CD14-positive monocyte (primary cell): ENCODE measurements at regions of chr4 and their contacts with region 1.

Region 1: DNA sequence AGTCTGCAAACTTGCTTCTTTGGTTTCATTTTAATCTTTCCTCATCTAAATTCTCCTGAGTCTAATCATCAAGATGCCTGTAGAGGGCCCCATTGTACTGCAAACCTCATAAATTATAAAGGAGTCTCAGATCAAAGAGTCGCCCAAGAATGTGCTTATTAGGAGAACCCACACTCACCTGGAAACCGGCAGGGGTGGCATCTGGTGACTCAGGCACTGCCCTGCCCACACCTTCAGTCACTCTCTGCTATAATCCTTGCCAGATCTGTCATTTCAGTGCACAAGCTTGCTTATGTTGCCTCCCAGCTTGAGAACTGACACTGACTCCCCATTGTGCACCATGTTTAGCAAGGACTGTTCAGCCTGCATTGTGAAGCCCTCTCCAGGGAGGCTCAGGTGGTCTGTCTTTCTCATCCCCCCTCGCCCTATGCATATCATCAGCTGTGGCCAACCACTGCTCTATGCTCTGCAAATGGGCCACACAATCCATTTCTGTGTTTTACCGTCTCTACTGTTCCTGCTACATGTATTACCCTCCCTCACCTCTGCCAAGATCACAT is 12.4 kb downstream of the EPGN start:
- DNase-seq: peak; percentile 47 to 77 (median 71)
- H3K4me3 ChIP-seq: no peak overlapping the region
- H3K4me3 Mint-ChIP-seq: peak overlapping the region; percentile 60 to 63
- H3K27ac ChIP-seq: no peak overlapping the region
- H3K27ac Mint-ChIP-seq: peak overlapping the region in 4 of 7 donors; percentile 6 to 45 (median 24)
- H3K4me1 ChIP-seq: peaks cover 4 to 8% of the 10 kb centered on the region in 2 donors
- H3K4me1 Mint-ChIP-seq: peaks cover 22% of the 10 kb centered on the region
- H3K27me3 ChIP-seq: no peaks in the 10 kb centered on the region
- H3K27me3 Mint-ChIP-seq: peaks cover 0 to 2% (median 0%) of the 10 kb centered on the region in 3 donors
- CTCF ChIP-seq: peak; percentile 81

Region 2: GRCh38 chr4:74278490-74278889 is 42.1 kb before region 1 on chr4:
- intact Hi-C with region 1: no loop called
- DNase-seq: no peak
- H3K4me3 ChIP-seq: no peak overlapping the region
- H3K4me3 Mint-ChIP-seq: no peak overlapping the region
- H3K27ac ChIP-seq: no peak overlapping the region
- H3K27ac Mint-ChIP-seq: peak overlapping the region in 1 of 7 donors; percentile 52
- H3K4me1 ChIP-seq: peaks cover 0 to 5% of the 10 kb centered on the region in 2 donors
- H3K4me1 Mint-ChIP-seq: peaks cover 9% of the 10 kb centered on the region
- H3K27me3 ChIP-seq: no peaks in the 10 kb centered on the region
- H3K27me3 Mint-ChIP-seq: no peaks in the 10 kb centered on the region
- CTCF ChIP-seq: no peak

Region 3: GRCh38 chr4:74364652-74365491 is 44.2 kb after region 1 on chr4 and contains the start of gene EREG:
- intact Hi-C with region 1: loop called (anchors 5 kb)
- DNase-seq: peak; percentile 83 to 98 (median 83)
- H3K4me3 ChIP-seq: peak within 1 kb of the TSS; percentile 63 to 83 (median 71)
- H3K4me3 Mint-ChIP-seq: peak within 1 kb of the TSS; percentile 88 to 94
- H3K27ac ChIP-seq: peak within 1 kb of the TSS; percentile 1 to 84
- H3K27ac Mint-ChIP-seq: peak within 1 kb of the TSS; percentile 72 to 93 (median 83)
- H3K4me1 ChIP-seq: peaks cover 21 to 30% of the 10 kb centered on the region in 2 donors
- H3K4me1 Mint-ChIP-seq: peaks cover 41% of the 10 kb centered on the region
- H3K27me3 ChIP-seq: no peaks in the 10 kb centered on the region
- H3K27me3 Mint-ChIP-seq: peaks cover 2 to 8% (median 8%) of the 10 kb centered on the region in 3 donors
- CTCF ChIP-seq: no peak
- polyA plus RNA-seq, gene EREG: 2.7 to 17.2 (median 8.2) TPM

Region 4: GRCh38 chr4:74370912-74371311 is 50.3 kb after region 1 on chr4:
- intact Hi-C with region 1: loop called (anchors 5 kb)
- DNase-seq: peak in 2 of 3 donors; percentile 64 to 71
- H3K4me3 ChIP-seq: no peak overlapping the region
- H3K4me3 Mint-ChIP-seq: no peak overlapping the region
- H3K27ac ChIP-seq: no peak overlapping the region
- H3K27ac Mint-ChIP-seq: no peak overlapping the region
- H3K4me1 ChIP-seq: peaks cover 28 to 34% of the 10 kb centered on the region in 2 donors
- H3K4me1 Mint-ChIP-seq: peaks cover 49% of the 10 kb centered on the region
- H3K27me3 ChIP-seq: no peaks in the 10 kb centered on the region
- H3K27me3 Mint-ChIP-seq: peaks cover 0 to under 1% (median 0%) of the 10 kb centered on the region in 3 donors
- CTCF ChIP-seq: peak; percentile 68

Region 5: DNA sequence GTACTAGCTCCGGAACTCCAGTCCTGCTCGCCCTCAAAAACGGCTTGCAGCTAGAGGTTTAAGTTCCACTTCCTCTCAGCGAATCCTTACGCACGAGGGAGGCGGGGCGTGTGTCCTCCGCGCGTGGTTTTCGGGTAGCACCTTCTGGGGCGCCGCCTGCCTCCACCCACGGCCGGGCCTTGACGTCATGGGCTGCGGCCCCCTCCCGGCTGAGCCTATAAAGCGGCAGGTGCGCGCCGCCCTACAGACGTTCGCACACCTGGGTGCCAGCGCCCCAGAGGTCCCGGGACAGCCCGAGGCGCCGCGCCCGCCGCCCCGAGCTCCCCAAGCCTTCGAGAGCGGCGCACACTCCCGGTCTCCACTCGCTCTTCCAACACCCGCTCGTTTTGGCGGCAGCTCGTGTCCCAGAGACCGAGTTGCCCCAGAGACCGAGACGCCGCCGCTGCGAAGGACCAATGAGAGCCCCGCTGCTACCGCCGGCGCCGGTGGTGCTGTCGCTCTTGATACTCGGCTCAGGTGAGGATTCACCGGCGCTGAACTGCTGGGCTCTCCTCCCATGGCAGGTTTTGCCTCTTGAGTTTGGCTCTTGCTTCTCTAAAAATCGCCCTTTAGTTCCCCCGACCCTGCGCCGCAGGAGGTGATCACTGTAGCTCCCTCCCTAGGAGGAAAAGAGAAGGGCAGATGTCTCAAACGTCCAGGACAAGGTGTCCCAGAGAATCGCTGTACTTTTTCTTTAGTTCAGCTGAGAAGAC is 124.4 kb after region 1 on chr4 and contains the start of gene AREG:
- intact Hi-C with region 1: loop called (anchors 5 to 10 kb)
- DNase-seq: peak; percentile 73 to 82 (median 80)
- H3K4me3 ChIP-seq: peak within 1 kb of the TSS; percentile 67 to 86 (median 82)
- H3K4me3 Mint-ChIP-seq: peak within 1 kb of the TSS; percentile 96 to 99
- H3K27ac ChIP-seq: peak within 1 kb of the TSS; percentile 72 to 74
- H3K27ac Mint-ChIP-seq: peak within 1 kb of the TSS; percentile 86 to 97 (median 96)
- H3K4me1 ChIP-seq: peaks cover 12 to 16% of the 10 kb centered on the region in 2 donors
- H3K4me1 Mint-ChIP-seq: peaks cover 13% of the 10 kb centered on the region
- H3K27me3 ChIP-seq: peaks cover 3 to 4% of the 10 kb centered on the region in 2 donors
- H3K27me3 Mint-ChIP-seq: peaks cover 0 to 5% (median 2%) of the 10 kb centered on the region in 3 donors
- CTCF ChIP-seq: peak; percentile 81
- polyA plus RNA-seq, gene AREG: 4.2 to 9.2 (median 9.1) TPM

Region 6: DNA sequence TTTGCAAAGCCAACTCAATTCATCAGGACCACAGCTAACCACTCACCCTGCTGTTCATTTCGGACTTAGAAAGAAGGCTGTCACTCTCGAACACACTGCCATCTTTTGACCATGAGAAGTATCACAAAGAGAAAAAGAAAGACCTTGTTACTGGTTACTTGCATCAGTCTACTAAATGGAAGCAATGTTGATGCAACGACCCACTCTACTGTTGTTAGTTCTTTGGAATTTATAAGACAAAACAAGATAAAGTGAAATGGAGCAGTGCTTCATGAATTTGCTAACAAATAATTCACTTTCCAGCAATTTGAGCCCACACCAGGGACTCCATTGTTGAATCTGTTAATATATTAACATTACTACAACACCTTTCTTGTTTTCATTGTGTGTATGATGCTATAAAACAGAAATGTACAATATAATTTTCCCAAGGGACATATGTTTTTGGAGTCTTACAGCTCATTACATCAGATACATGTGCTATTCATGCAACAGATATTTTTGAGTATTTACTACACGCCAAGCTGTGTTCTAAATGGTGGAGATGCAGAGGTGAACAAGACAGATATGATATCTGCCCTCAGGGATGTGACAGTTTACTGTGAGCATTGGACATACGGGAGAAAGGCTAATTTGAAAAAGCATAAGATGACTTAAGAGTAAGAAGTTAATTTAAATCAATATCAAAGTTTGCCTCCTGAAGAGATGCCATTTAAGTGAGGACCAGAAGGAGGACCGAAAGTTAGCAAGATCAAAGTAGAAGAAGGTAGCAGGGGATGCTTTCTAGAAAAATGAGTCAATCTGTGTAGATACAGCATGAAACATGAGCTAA is 211.5 kb after region 1 on chr4:
- intact Hi-C with region 1: loop called in 1 of 2 experiments (anchors 5 kb)
- DNase-seq: peak; percentile 24 to 55 (median 51)
- H3K4me3 ChIP-seq: no peak overlapping the region
- H3K4me3 Mint-ChIP-seq: no peak overlapping the region
- H3K27ac ChIP-seq: no peak overlapping the region
- H3K27ac Mint-ChIP-seq: no peak overlapping the region
- H3K4me1 ChIP-seq: no peaks in the 10 kb centered on the region
- H3K4me1 Mint-ChIP-seq: peaks cover 6% of the 10 kb centered on the region
- H3K27me3 ChIP-seq: no peaks in the 10 kb centered on the region
- H3K27me3 Mint-ChIP-seq: peaks cover 0 to 3% (median 0%) of the 10 kb centered on the region in 3 donors
- CTCF ChIP-seq: peak; percentile 57

Region 7: GRCh38 chr4:74623041-74623440 is 302.4 kb after region 1 on chr4:
- intact Hi-C with region 1: loop called in 1 of 2 experiments (anchors 10 kb)
- DNase-seq: peak in 2 of 3 donors; percentile 36 to 51
- H3K4me3 ChIP-seq: no peak overlapping the region
- H3K4me3 Mint-ChIP-seq: no peak overlapping the region
- H3K27ac ChIP-seq: no peak overlapping the region
- H3K27ac Mint-ChIP-seq: peak overlapping the region in 5 of 7 donors; percentile 20 to 76 (median 41)
- H3K4me1 ChIP-seq: peaks cover 14 to 20% of the 10 kb centered on the region in 2 donors
- H3K4me1 Mint-ChIP-seq: peaks cover 23% of the 10 kb centered on the region
- H3K27me3 ChIP-seq: no peaks in the 10 kb centered on the region
- H3K27me3 Mint-ChIP-seq: peaks cover 0 to 3% (median 1%) of the 10 kb centered on the region in 3 donors
- CTCF ChIP-seq: peak; percentile 73

Region 8: GRCh38 chr4:74671080-74671698 is 350.6 kb after region 1 on chr4:
- intact Hi-C with region 1: loop called (anchors 5 kb)
- DNase-seq: peak; percentile 36 to 61 (median 61)
- H3K4me3 ChIP-seq: no peak overlapping the region
- H3K4me3 Mint-ChIP-seq: no peak overlapping the region
- H3K27ac ChIP-seq: no peak overlapping the region
- H3K27ac Mint-ChIP-seq: no peak overlapping the region
- H3K4me1 ChIP-seq: no peaks in the 10 kb centered on the region
- H3K4me1 Mint-ChIP-seq: peaks cover 4% of the 10 kb centered on the region
- H3K27me3 ChIP-seq: no peaks in the 10 kb centered on the region
- H3K27me3 Mint-ChIP-seq: peaks cover 0 to 6% (median 1%) of the 10 kb centered on the region in 3 donors
- CTCF ChIP-seq: peak; percentile 85

Region 9: GRCh38 chr4:74768857-74769525 is 448.4 kb after region 1 on chr4:
- intact Hi-C with region 1: no loop called
- DNase-seq: no peak
- H3K4me3 ChIP-seq: no peak overlapping the region
- H3K4me3 Mint-ChIP-seq: no peak overlapping the region
- H3K27ac ChIP-seq: no peak overlapping the region
- H3K27ac Mint-ChIP-seq: no peak overlapping the region
- H3K4me1 ChIP-seq: no peaks in the 10 kb centered on the region
- H3K4me1 Mint-ChIP-seq: no peaks in the 10 kb centered on the region
- H3K27me3 ChIP-seq: no peaks in the 10 kb centered on the region
- H3K27me3 Mint-ChIP-seq: no peaks in the 10 kb centered on the region
- CTCF ChIP-seq: no peak